SK-N-SH (cell line): ENCODE measurements at regions of chr19 and their contacts with region 1.

Region 1: DNA sequence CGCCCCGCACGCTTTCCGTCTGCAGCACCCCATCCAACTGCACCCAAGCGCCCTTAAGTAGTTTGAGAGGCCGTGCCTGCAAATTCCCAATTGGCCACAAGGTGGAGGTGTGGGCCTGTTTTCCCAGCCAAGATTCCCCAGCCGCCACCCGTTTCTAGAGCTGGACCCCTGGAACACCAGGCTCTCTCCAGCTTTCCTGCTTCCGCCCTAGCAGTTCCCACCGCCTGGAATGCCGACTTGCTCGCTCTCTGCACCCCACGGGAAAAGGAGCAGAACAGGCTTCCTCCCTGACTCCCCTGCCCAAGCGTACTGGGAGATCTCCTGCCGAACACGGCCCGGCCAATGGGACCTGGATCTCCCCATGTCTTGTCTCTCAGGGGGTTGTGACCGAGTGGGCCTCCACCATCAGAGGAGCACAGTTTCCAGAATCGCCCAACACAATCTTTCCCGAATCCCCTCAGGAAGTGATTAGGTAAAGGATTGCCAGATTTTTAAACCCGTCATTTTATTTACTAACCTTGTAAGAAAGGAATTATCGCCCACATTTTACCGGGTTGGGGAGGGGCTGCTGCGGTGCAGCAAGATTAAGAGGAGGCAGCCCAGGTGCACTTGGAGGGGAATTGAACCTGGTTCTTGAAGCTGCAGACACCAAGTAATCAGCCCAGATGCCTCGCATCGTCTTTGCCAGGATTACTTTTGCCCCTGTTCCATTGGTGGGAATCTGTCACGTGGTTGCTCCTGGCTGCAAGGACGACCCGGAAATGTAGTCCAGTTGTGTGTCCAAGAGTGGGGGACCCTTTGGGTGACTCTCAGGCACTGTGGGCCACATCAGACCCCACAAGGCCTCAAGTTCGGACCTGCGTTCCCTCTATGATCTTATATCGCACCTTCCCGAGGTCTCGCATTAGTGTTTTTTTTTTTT is 3.5 kb upstream of the NAPSA start:
- DNase-seq: peak; percentile 84
- H3K4me3 ChIP-seq: peak overlapping the region; percentile 59 to 67
- H3K27ac ChIP-seq: peak overlapping the region; percentile 36 to 80
- H3K4me1 ChIP-seq: peaks cover 0 to 2% of the 10 kb centered on the region in 2 experiments; a peak in 1 of 4 replicates
- H3K27me3 ChIP-seq: no peaks in the 10 kb centered on the region
- CTCF ChIP-seq: peak; percentile 76
- EP300 ChIP-seq: no peak
- RAD21 ChIP-seq: peak; percentile 87

Region 2: DNA sequence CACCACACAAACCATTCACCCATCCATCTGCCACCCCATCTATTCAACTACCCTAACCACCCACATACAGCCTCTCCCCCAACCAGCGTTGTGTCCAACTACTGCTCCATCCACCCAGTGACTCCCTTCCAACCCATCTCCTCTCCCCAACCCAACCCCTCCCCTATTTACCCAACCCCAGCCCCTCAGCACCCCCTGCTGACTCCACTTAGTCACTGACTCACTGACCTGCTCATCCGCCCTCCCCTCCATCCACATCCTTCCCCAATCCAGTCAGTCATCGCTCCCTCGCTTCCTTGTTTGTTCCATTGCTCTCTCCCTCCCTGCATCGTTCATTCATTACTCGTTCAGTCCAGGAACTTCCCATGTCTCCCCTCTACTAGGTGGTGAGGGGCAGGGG is 78.9 kb before region 1 on chr19:
- CTCF ChIA-PET with region 1: no interaction called
- POLR2A ChIA-PET with region 1: no interaction called
- DNase-seq: no peak
- H3K4me3 ChIP-seq: no peak overlapping the region
- H3K27ac ChIP-seq: no peak overlapping the region
- H3K4me1 ChIP-seq: no peaks in the 10 kb centered on the region
- H3K27me3 ChIP-seq: peaks cover 21% of the 10 kb centered on the region
- CTCF ChIP-seq: no peak
- EP300 ChIP-seq: no peak
- RAD21 ChIP-seq: no peak

Region 3: GRCh38 chr19:50352242-50352641 is 16.7 kb before region 1 on chr19:
- CTCF ChIA-PET with region 1: interaction called, 27 read pairs
- POLR2A ChIA-PET with region 1: no interaction called
- DNase-seq: no peak
- H3K4me3 ChIP-seq: no peak overlapping the region
- H3K27ac ChIP-seq: no peak overlapping the region
- H3K4me1 ChIP-seq: no peaks in the 10 kb centered on the region; a peak in 1 of 4 replicates
- H3K27me3 ChIP-seq: no peaks in the 10 kb centered on the region
- CTCF ChIP-seq: no peak
- EP300 ChIP-seq: no peak
- RAD21 ChIP-seq: no peak

Region 4: GRCh38 chr19:50357178-50358100 is 11.5 kb before region 1 on chr19:
- CTCF ChIA-PET with region 1: interaction called, 27 read pairs
- POLR2A ChIA-PET with region 1: interaction called, 3 read pairs
- DNase-seq: peak; percentile 70
- H3K4me3 ChIP-seq: peak overlapping the region; percentile 43 to 52
- H3K27ac ChIP-seq: peak overlapping the region in 1 of 2 experiments; percentile 67; a peak in 2 of 4 replicates
- H3K4me1 ChIP-seq: peaks cover 0 to 4% of the 10 kb centered on the region in 2 experiments; a peak in 1 of 4 replicates
- H3K27me3 ChIP-seq: no peaks in the 10 kb centered on the region
- CTCF ChIP-seq: peak; percentile 82
- EP300 ChIP-seq: no peak
- RAD21 ChIP-seq: peak; percentile 78

Region 5: DNA sequence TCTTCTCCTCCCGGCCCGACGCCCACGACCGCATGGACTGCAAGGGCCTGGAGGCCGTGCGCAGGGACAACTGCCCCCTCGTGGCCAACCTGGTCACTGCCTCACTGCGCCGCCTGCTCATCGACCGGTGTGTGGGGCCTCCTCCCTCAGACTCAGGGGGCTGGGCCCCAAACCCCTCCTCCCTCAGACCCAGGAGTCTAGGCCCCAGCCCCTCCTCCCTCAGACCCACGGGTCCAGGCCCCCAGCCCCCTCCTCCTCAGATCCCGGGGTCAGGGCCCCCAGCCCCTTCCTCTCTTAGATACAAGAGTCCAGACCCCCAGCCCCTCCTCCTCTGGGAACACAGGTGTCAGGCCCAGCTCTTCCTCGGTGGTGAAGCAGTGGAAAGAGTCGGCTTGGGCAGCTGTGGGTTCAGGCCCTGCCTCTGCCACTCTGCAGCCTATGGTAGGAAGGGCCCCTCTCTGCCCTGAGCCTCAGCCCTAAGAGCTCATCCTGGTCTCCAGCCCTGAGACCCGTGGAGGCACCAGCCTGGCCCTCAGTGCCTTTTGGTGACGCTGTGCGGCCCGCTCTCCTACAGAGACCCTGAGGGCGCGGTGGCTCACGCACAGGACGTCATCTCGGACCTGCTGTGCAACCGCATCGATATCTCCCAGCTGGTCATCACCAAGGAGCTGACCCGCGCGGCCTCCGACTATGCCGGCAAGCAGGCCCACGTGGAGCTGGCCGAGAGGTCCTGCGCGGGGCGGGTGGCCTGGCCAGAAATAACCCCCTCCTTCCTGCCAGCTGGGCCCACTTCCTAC is 46.2 kb after region 1 on chr19:
- CTCF ChIA-PET with region 1: interaction called, 23 read pairs
- POLR2A ChIA-PET with region 1: interaction called, 4 read pairs
- DNase-seq: peak; percentile 92
- H3K4me3 ChIP-seq: no peak overlapping the region; a peak in 1 of 4 replicates
- H3K27ac ChIP-seq: no peak overlapping the region; a peak in 1 of 4 replicates
- H3K4me1 ChIP-seq: no peaks in the 10 kb centered on the region; a peak in 1 of 4 replicates
- H3K27me3 ChIP-seq: no peaks in the 10 kb centered on the region
- CTCF ChIP-seq: peak; percentile 77
- EP300 ChIP-seq: no peak
- RAD21 ChIP-seq: peak; percentile 58

Region 6: DNA sequence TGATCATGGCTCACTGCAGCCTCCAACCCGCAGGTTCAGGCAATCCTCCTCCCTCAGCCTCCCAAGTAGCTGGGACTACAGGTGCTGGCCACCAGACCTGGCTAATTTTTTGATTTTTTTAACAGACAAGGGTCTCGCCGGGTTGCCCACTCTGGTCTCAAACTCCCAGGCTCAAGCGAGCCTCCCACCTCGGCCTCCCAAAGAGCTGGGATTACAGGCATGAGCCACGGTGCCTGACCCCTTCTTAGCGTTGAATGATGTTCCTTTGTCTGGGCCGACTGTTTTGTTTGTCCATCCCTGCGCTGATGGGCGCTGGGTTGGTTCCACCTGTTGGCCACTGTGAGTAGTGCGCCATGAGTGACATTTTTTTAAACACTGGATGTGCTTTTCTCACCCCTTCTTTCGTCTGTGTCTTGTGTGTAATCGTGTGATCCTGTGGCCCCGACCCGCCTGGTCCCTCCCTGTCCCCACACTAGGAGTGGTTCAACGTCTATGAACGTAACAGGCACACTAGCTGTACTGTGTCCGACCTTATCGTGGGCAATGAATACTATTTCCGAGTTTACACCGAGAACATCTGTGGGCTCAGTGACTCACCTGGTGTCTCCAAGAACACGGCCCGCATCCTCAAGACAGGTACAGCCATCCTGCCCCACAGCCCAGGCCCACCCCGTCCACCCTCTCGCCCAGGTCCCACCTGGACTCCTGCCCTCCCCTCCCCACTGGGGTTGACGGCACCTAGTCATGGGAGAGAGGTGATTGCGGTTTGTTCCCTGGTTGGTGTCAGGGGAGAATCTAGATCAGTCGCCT is 92.4 kb after region 1 on chr19:
- CTCF ChIA-PET with region 1: interaction called, 80 read pairs
- POLR2A ChIA-PET with region 1: interaction called, 3 read pairs
- DNase-seq: peak; percentile 93
- H3K4me3 ChIP-seq: peak overlapping the region in 1 of 2 experiments; percentile 22; a peak in 1 of 4 replicates
- H3K27ac ChIP-seq: no peak overlapping the region
- H3K4me1 ChIP-seq: peaks cover 0 to 4% of the 10 kb centered on the region in 2 experiments; a peak in 1 of 4 replicates
- H3K27me3 ChIP-seq: peaks cover 5% of the 10 kb centered on the region; the same call in 1 of the 2 replicates
- CTCF ChIP-seq: peak; percentile 81
- EP300 ChIP-seq: no peak
- RAD21 ChIP-seq: peak; percentile 91

Region 7: GRCh38 chr19:50478901-50479736 is 110.2 kb after region 1 on chr19:
- CTCF ChIA-PET with region 1: interaction called, 12 read pairs
- POLR2A ChIA-PET with region 1: no interaction called
- DNase-seq: no peak
- H3K4me3 ChIP-seq: no peak overlapping the region
- H3K27ac ChIP-seq: no peak overlapping the region
- H3K4me1 ChIP-seq: peaks cover 6 to 9% of the 10 kb centered on the region in 2 experiments; a peak in 2 of 4 replicates
- H3K27me3 ChIP-seq: no peaks in the 10 kb centered on the region
- CTCF ChIP-seq: peak; percentile 52
- EP300 ChIP-seq: no peak
- RAD21 ChIP-seq: no peak

Region 8: GRCh38 chr19:50537762-50538230 is 168.9 kb after region 1 on chr19:
- CTCF ChIA-PET with region 1: interaction called, 13 read pairs
- POLR2A ChIA-PET with region 1: no interaction called
- DNase-seq: peak; percentile 93
- H3K4me3 ChIP-seq: peak overlapping the region in 1 of 2 experiments; percentile 22; a peak in 1 of 4 replicates
- H3K27ac ChIP-seq: no peak overlapping the region
- H3K4me1 ChIP-seq: peaks cover 0 to 3% of the 10 kb centered on the region in 2 experiments; a peak in 1 of 4 replicates
- H3K27me3 ChIP-seq: no peaks in the 10 kb centered on the region
- CTCF ChIP-seq: peak; percentile 87
- EP300 ChIP-seq: no peak
- RAD21 ChIP-seq: peak; percentile 82